ENCODE measurements at regions of chr20 and their contacts with region 1.

Region 1: DNA sequence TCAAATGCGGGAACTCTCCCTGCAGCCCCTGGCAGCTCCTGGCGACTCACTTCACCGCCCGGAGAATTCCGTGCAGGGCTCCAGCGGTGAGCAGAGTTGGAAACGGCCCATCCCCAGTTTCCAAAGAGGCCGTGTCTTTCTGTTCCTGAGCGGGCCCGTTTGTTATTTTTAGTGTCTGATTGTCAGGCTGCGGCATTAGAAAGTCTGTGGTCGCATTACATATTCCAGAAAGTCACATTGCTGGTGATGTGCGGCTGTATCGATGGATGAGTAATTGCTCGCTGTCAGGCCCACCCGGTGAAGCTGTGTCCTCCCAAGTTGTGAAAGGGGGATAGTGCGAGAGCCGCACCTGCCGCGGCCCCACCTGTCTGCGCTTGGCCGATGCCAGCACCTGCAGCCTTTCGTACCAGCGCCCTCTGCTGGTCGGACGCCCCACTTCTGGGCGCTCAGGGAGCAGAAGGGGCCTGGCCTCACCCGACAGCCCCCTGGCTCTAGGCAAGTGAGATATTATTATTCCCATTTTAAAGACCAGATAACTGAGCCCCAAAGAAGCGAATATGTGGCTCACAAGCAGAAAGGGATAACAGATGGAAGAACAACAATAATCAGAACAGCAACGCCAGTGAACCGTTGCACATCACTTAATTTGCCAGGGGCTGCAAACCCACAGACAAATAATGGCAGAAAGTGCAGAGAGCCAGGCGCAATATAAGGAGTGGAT is 244.9 kb downstream of the TSHZ2 start:
- DNase-seq: peak; percentile 65 to 86 (median 79)
- ATAC-seq: peak; percentile 91
- H3K4me3 ChIP-seq: peak overlapping the region; percentile 34
- H3K4me3 Mint-ChIP-seq: peak overlapping the region; percentile 48 to 80 (median 74)
- H3K27ac ChIP-seq: peak overlapping the region; percentile 48
- H3K27ac Mint-ChIP-seq: peak overlapping the region; percentile 44 to 97 (median 74)
- H3K4me1 ChIP-seq: peaks cover 0 to 33% of the 10 kb centered on the region in 2 donors
- H3K4me1 Mint-ChIP-seq: peaks cover 14 to 46% (median 41%) of the 10 kb centered on the region in 7 donors
- H3K27me3 ChIP-seq: no peaks in the 10 kb centered on the region
- H3K27me3 Mint-ChIP-seq: peaks cover 0 to 4% (median 0%) of the 10 kb centered on the region in 5 donors

Region 2: DNA sequence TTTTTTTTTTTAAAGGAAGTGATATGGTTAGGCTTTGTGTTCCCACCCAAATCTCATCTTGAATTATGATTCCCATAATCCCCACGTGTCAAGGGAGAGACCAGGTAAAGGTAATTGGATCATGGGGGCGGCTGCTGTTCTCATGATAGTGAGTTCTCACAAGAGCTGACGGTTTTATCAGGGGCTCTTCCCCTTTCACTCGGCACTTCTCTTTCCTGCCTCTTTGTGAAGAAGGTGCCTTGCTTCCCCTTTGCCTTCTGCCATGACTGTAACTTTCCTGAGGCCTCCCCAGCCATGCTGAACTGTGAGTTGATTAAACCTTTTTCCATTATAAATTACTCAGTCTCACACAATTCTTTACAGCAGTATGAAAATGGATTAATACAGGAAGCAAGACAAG is 1089.7 kb before region 1 on chr20:
- CTCF ChIA-PET with region 1: no interaction called
- POLR2A ChIA-PET with region 1: no interaction called
- intact Hi-C with region 1: loop called in 1 of 2 experiments (anchors 5 kb)
- DNase-seq: no peak
- ATAC-seq: no peak
- H3K4me3 ChIP-seq: no peak overlapping the region
- H3K4me3 Mint-ChIP-seq: no peak overlapping the region
- H3K27ac ChIP-seq: no peak overlapping the region
- H3K27ac Mint-ChIP-seq: peak overlapping the region in 1 of 9 donors; percentile 3
- H3K4me1 ChIP-seq: no peaks in the 10 kb centered on the region
- H3K4me1 Mint-ChIP-seq: peaks cover 0 to 8% (median 2%) of the 10 kb centered on the region in 7 donors
- H3K27me3 ChIP-seq: no peaks in the 10 kb centered on the region
- H3K27me3 Mint-ChIP-seq: peaks cover 0 to 3% (median 0%) of the 10 kb centered on the region in 5 donors

Region 3: DNA sequence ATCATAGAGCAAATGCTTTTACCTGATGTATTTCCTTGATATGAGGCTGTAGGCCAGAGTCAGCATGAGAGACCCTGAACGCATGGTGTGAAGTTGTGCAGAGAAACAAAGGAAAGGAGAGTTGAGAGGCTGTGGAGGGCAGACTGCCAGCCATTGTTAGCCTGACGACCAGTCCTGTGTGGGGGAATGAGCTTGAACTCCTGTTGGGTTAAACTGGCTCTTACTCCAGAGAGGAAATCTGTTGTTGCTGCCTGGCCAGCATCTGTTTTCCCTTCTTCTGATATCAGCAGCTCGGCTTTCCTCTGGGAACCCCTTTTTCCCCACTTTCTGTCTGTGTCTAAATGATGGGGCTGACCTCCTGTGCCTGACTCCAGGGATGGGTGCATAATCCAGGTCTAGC is 867.2 kb before region 1 on chr20:
- CTCF ChIA-PET with region 1: interaction called, 3 read pairs
- POLR2A ChIA-PET with region 1: interaction called, 3 read pairs
- intact Hi-C with region 1: loop called in 1 of 2 experiments (anchors 1 kb)
- DNase-seq: no peak
- ATAC-seq: no peak
- H3K4me3 ChIP-seq: no peak overlapping the region
- H3K4me3 Mint-ChIP-seq: no peak overlapping the region
- H3K27ac ChIP-seq: no peak overlapping the region
- H3K27ac Mint-ChIP-seq: peak overlapping the region in 1 of 9 donors; percentile 34
- H3K4me1 ChIP-seq: no peaks in the 10 kb centered on the region
- H3K4me1 Mint-ChIP-seq: peaks cover 0 to 15% (median 9%) of the 10 kb centered on the region in 7 donors
- H3K27me3 ChIP-seq: no peaks in the 10 kb centered on the region
- H3K27me3 Mint-ChIP-seq: peaks cover 0 to 5% (median 0%) of the 10 kb centered on the region in 5 donors

Region 4: DNA sequence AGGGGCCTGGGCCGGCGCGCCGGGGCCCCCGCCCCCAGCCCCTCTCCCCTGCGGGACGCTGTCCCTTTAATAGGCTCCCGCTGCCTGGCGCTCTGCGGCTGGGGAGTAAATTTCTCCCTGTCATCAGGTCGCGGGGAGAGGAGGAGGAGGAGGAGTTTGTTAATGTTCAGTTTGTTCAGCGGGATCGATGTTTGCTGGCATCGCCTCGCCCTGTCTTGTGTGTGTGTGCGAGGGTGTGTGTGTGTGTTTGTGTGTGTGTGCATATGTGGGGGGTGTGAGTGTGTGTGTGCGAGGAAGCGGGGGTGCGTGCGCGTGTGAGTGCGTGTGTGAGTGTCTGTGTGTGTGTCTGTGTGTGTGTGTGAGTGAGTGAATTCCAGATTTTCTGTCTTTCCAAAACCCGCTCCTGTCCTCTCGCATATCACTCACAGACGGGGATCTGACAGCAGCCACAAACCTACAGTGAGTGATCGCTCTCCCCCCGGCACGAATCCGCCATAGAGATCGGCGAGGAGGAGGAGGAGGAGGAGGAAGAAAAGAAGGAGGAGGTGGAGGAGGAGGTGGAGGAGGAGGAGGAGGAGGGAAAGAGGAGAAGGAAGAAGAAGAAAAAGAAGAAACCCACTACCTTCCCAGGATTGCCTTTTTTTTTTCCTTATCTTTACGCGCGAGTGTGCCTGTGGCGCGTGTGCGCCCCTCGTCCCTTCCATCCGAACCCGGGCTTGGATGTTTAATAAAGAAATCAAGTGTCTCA is 244.7 kb before region 1 on chr20 and contains the start of gene TSHZ2:
- CTCF ChIA-PET with region 1: interaction called, 4 read pairs
- POLR2A ChIA-PET with region 1: interaction called, 3 read pairs
- intact Hi-C with region 1: loop called (anchors 1 to 2 kb)
- DNase-seq: peak; percentile 27 to 75 (median 58)
- ATAC-seq: peak; percentile 66
- H3K4me3 ChIP-seq: peak within 1 kb of the TSS; percentile 65
- H3K4me3 Mint-ChIP-seq: peak within 1 kb of the TSS; percentile 90 to 100 (median 96)
- H3K27ac ChIP-seq: peak within 1 kb of the TSS; percentile 97
- H3K27ac Mint-ChIP-seq: peak within 1 kb of the TSS; percentile 93 to 97 (median 95)
- H3K4me1 ChIP-seq: peaks cover 0 to 12% of the 10 kb centered on the region in 2 donors
- H3K4me1 Mint-ChIP-seq: peaks cover 12 to 45% (median 38%) of the 10 kb centered on the region in 7 donors
- H3K27me3 ChIP-seq: peaks cover 0 to 3% of the 10 kb centered on the region in 2 donors
- H3K27me3 Mint-ChIP-seq: peaks cover 0 to 32% (median 7%) of the 10 kb centered on the region in 5 donors
- total RNA-seq, gene TSHZ2: 21.0 to 84.5 (median 59.2) TPM

Region 5: GRCh38 chr20:53077373-53078205 is 139.4 kb before region 1 on chr20:
- CTCF ChIA-PET with region 1: no interaction called
- POLR2A ChIA-PET with region 1: no interaction called
- intact Hi-C with region 1: loop called in 1 of 2 experiments (anchors 10 kb)
- DNase-seq: no peak
- ATAC-seq: no peak
- H3K4me3 ChIP-seq: no peak overlapping the region
- H3K4me3 Mint-ChIP-seq: no peak overlapping the region
- H3K27ac ChIP-seq: no peak overlapping the region
- H3K27ac Mint-ChIP-seq: no peak overlapping the region
- H3K4me1 ChIP-seq: peaks cover 0 to 37% of the 10 kb centered on the region in 2 donors
- H3K4me1 Mint-ChIP-seq: peaks cover 15 to 44% (median 19%) of the 10 kb centered on the region in 7 donors
- H3K27me3 ChIP-seq: peaks cover 0 to 3% of the 10 kb centered on the region in 2 donors
- H3K27me3 Mint-ChIP-seq: peaks cover 0 to 8% (median 0%) of the 10 kb centered on the region in 5 donors

Region 6: DNA sequence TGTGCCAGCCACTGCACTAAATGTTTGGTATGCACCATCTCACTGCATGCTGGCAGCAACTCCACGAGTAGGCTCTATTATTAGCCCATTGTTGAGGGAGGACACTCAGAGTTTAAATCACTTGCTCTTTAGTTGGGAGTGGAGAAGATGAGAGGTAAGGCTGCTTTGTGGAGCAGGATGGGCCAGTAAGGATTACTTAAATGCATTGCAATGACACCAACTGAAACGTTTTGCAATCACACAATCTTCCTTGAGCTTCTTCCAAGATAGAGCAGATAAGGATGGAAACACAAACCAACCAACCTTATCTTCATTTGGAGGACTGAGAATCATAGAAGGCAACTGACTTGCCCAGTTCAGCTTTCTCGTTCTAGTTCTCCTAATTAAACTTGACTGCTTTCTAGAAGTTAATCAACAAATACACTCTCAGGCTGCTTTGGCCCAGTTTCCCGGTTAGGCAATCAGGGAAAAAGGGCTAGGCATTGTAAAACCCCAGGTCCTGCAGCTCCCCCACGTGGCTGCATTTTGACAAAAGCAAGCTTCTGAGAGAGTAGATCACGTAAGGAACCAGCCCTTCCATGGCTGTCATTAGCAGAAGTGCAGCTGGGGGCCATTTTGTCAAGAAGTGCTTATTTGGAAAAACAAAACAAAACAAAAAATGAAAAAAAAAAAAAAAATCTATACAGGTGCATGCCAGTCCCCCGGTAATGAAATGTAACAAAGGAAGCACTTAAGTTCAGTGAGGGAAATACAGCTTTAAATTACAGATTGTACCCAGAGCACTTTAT is 722.8 kb after region 1 on chr20:
- CTCF ChIA-PET with region 1: no interaction called
- POLR2A ChIA-PET with region 1: no interaction called
- intact Hi-C with region 1: loop called in 1 of 2 experiments (anchors 10 kb)
- DNase-seq: peak; percentile 35 to 62 (median 48)
- ATAC-seq: peak; percentile 82
- H3K4me3 ChIP-seq: no peak overlapping the region
- H3K4me3 Mint-ChIP-seq: peak overlapping the region in 3 of 10 donors; percentile 24 to 44 (median 30)
- H3K27ac ChIP-seq: no peak overlapping the region
- H3K27ac Mint-ChIP-seq: peak overlapping the region in 6 of 9 donors; percentile 2 to 79 (median 22)
- H3K4me1 ChIP-seq: peaks cover 15 to 24% of the 10 kb centered on the region in 2 donors
- H3K4me1 Mint-ChIP-seq: peaks cover 26 to 62% (median 44%) of the 10 kb centered on the region in 7 donors
- H3K27me3 ChIP-seq: no peaks in the 10 kb centered on the region
- H3K27me3 Mint-ChIP-seq: no peaks in the 10 kb centered on the region